GM12878 (cell line): ENCODE measurements at regions of chr10 and their contacts with region 1.

Region 1: GRCh38 chr10:96292971-96293920 is 11.0 kb upstream of the DNTT start:
- DNase-seq: no peak
- ATAC-seq: peak; percentile 79
- H3K4me3 ChIP-seq: no peak overlapping the region
- H3K27ac ChIP-seq: no peak overlapping the region
- H3K4me1 ChIP-seq: peaks cover 35% of the 10 kb centered on the region
- H3K27me3 ChIP-seq: no peaks in the 10 kb centered on the region
- CTCF ChIP-seq: peak; percentile 58 to 83 (median 76); a peak in 4 of 6 replicates
- EP300 ChIP-seq: no peak
- POLR2A ChIP-seq: no peak
- RAD21 ChIP-seq: peak; percentile 92

Region 2: DNA sequence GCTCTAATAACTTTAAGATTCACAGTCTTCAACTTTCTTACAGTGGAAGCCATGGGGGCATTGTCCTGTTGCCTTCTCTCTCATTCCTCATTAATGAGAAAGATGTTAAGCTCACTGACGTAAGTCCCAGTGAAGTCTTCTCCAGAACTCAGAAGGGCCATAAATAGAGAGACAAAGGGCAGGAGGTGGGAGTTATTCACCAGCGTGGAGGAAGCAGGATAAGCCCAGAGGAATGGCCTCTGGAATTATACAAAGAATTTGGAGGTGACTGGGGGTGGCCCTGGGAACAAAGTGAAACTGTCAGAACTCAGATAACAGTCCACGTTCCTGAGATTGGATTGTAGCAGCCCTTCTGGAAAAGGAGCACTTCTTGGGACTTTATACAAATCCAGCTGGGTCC is 784.5 kb before region 1 on chr10:
- CTCF ChIA-PET with region 1: no interaction called
- POLR2A ChIA-PET with region 1: no interaction called
- RAD21 ChIA-PET with region 1: no interaction called
- SMC1A ChIA-PET with region 1: no interaction called
- in situ Hi-C with region 1: no loop called
- intact Hi-C with region 1: no loop called
- DNase-seq: no peak
- ATAC-seq: no peak
- H3K4me3 ChIP-seq: no peak overlapping the region
- H3K27ac ChIP-seq: no peak overlapping the region
- H3K4me1 ChIP-seq: no peaks in the 10 kb centered on the region
- H3K27me3 ChIP-seq: peaks cover 0 to 3% of the 10 kb centered on the region in 2 experiments; a peak in 2 of 4 replicates
- CTCF ChIP-seq: no peak
- EP300 ChIP-seq: no peak
- POLR2A ChIP-seq: no peak
- RAD21 ChIP-seq: no peak

Region 3: DNA sequence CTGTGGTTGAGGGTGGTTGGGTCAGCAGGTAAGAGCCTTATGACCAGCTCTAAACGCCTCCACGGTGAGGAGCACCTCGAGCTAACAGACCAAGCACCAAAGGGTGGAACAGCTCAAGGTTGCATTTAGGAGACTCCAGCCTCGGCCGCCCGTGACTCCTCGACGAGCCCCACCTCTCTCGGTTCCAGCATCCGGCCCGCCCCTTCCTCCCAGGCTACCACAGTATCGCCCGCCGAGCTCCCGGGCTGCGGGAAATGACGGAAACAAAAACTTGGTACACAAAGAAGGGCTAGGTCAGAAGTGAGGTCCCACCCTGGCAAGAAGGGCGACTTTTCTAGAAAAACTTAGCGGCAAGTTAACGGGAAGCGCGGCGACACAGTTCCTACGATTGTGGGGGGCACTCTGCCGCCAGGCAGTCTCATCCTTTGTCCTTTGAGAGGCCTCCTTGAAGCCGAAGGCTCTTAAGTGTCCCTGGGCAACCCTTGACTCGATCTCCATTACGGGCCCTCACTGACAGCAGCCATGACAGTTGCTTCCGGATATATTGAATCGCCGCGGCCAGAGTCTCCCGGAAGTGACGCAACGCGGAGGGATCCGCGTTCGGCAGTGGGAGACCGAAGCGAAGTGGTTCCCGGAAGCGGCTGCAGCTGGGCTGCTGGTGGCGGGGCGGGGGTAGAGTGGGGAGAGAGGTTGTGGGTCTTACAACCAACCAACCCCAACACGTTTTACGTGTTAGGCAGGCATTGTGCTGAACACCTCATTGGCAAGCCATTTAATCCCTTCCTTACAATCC is 203.4 kb before region 1 on chr10:
- CTCF ChIA-PET with region 1: interaction called, 6 read pairs
- POLR2A ChIA-PET with region 1: interaction called, 3 read pairs
- RAD21 ChIA-PET with region 1: interaction called, 15 read pairs
- SMC1A ChIA-PET with region 1: interaction called, 6 read pairs
- in situ Hi-C with region 1: no loop called
- intact Hi-C with region 1: loop called (anchors 2 kb)
- DNase-seq: peak; percentile 84
- ATAC-seq: peak; percentile 96
- H3K4me3 ChIP-seq: peak overlapping the region; percentile 79
- H3K27ac ChIP-seq: peak overlapping the region; percentile 95
- H3K4me1 ChIP-seq: 0 out of 2 replicates have a peak, but pooled peaks cover 3% of the 10 kb centered on the region
- H3K27me3 ChIP-seq: no peaks in the 10 kb centered on the region
- CTCF ChIP-seq: no peak
- EP300 ChIP-seq: peak in 1 of 2 experiments; percentile 54; a peak in 1 of 4 replicates
- POLR2A ChIP-seq: peak; percentile 97
- RAD21 ChIP-seq: no peak

Region 4: GRCh38 chr10:96222441-96222840 is 70.8 kb before region 1 on chr10:
- CTCF ChIA-PET with region 1: interaction called, 790 read pairs
- POLR2A ChIA-PET with region 1: no interaction called
- RAD21 ChIA-PET with region 1: interaction called, 428 read pairs
- SMC1A ChIA-PET with region 1: interaction called, 424 read pairs
- in situ Hi-C with region 1: loop called (anchors 5 kb)
- intact Hi-C with region 1: no loop called
- DNase-seq: no peak
- ATAC-seq: no peak
- H3K4me3 ChIP-seq: no peak overlapping the region
- H3K27ac ChIP-seq: no peak overlapping the region
- H3K4me1 ChIP-seq: no peaks in the 10 kb centered on the region
- H3K27me3 ChIP-seq: no peaks in the 10 kb centered on the region
- CTCF ChIP-seq: no peak
- EP300 ChIP-seq: no peak
- POLR2A ChIP-seq: no peak
- RAD21 ChIP-seq: no peak

Region 5: DNA sequence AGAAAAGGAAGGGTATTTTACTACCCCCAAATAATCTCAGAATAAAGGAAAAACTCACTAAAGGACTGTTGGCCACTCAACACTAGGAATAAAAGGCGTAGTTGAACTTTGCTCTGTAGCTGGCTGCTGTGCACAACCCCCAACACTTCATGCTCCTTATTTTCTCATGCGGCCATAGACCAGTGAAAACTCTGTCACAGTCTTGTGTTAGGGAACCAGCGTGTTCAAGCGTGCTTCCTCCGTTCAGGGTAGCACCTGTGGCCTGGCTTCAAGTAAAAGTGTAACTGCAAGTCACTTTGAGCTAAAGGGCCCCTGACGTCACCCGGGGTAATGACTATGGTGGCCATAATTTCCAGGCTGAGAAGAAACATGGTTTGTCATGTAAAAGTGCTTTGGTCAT is 48.9 kb before region 1 on chr10:
- CTCF ChIA-PET with region 1: interaction called, 790 read pairs
- POLR2A ChIA-PET with region 1: interaction called, 22 read pairs
- RAD21 ChIA-PET with region 1: interaction called, 428 read pairs
- SMC1A ChIA-PET with region 1: interaction called, 60 read pairs
- in situ Hi-C with region 1: no loop called
- intact Hi-C with region 1: loop called (anchors 1 kb)
- DNase-seq: peak; percentile 89
- ATAC-seq: peak; percentile 98
- H3K4me3 ChIP-seq: 0 out of 2 replicates have a peak overlapping the region, but pooled peaks have one; percentile 18
- H3K27ac ChIP-seq: peak overlapping the region; percentile 67
- H3K4me1 ChIP-seq: peaks cover 24% of the 10 kb centered on the region
- H3K27me3 ChIP-seq: no peaks in the 10 kb centered on the region
- CTCF ChIP-seq: no peak
- EP300 ChIP-seq: peak; percentile 41 to 56; a peak in 3 of 4 replicates
- POLR2A ChIP-seq: peak; percentile 46
- RAD21 ChIP-seq: peak; percentile 3; the same call in 1 of the 2 replicates

Region 6: DNA sequence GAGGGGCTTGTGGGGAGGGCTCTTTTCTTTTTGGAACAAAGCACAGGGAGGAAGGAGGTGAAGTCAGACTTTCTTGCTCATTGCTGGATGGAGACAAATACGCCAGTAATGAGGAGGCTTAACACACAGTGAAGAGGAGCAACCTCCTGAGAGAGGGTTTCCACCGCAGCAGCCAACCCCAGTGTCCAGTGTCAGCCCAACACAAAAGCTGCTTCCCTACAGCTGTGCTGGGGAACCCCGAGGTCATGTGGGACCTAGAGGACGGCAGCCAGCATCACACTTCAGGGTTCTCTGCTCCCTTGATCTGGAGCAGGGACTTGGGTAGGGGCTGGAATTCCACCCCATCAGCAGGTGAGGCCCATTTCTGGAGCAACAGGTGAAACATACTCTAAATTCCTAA is 29.6 kb before region 1 on chr10:
- CTCF ChIA-PET with region 1: interaction called, 213 read pairs
- POLR2A ChIA-PET with region 1: interaction called, 174 read pairs
- RAD21 ChIA-PET with region 1: interaction called, 362 read pairs
- SMC1A ChIA-PET with region 1: interaction called, 305 read pairs
- in situ Hi-C with region 1: no loop called
- intact Hi-C with region 1: no loop called
- DNase-seq: no peak
- ATAC-seq: peak; percentile 68
- H3K4me3 ChIP-seq: peak overlapping the region; percentile 40
- H3K27ac ChIP-seq: peak overlapping the region; percentile 60
- H3K4me1 ChIP-seq: peaks cover 37% of the 10 kb centered on the region
- H3K27me3 ChIP-seq: no peaks in the 10 kb centered on the region
- CTCF ChIP-seq: no peak
- EP300 ChIP-seq: no peak
- POLR2A ChIP-seq: no peak; the same call in 1 of the 2 replicates
- RAD21 ChIP-seq: no peak

Region 7: DNA sequence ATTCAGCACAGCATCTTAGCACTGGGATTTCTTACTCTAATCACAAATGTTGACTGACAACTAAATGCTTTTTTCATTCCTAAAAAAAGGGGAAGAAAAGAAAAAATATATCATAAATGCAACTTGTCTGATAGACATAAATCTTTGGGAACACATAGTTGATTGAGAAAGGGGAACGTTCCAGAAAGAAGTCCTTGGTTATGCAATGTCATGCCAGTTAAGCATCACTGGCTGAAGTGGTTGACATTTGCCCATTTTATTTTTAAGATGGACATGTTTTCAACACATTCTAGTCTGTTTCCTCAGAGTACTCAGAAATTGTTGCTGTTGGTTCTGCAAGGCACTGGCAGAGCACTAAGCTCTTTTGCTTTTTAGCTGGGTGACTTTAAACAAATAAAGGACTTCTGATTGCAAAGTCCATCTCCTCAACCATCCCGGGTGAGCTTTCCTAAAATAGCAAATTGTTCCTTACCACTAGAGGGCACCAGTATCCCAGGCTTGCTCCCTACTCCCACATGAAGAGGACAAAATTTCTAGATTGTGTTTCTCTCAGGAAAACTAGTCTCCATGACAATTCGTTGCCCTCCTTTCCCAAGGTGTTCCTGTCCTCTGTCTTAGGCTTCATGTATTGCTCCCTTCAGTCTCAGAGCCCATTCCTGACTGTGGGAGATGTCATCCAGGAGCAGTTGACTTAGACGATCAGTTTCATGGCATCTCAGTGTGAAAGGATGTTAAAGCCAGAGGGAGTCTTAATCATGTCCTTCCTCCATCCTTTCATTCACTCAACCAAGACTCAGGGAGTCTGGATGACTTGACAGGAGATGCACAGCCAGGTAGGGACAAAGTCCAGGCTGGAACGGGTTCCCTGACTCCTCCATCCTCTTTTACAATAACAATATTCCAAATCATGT is 41.6 kb after region 1 on chr10:
- CTCF ChIA-PET with region 1: interaction called, 11 read pairs
- POLR2A ChIA-PET with region 1: interaction called, 9 read pairs
- RAD21 ChIA-PET with region 1: interaction called, 4 read pairs
- SMC1A ChIA-PET with region 1: interaction called, 5 read pairs
- in situ Hi-C with region 1: no loop called
- intact Hi-C with region 1: no loop called
- DNase-seq: no peak
- ATAC-seq: no peak; the same call in 2 of the 3 replicates
- H3K4me3 ChIP-seq: no peak overlapping the region
- H3K27ac ChIP-seq: no peak overlapping the region
- H3K4me1 ChIP-seq: no peaks in the 10 kb centered on the region
- H3K27me3 ChIP-seq: no peaks in the 10 kb centered on the region
- CTCF ChIP-seq: peak; percentile 62 to 77 (median 62); a peak in 5 of 6 replicates
- EP300 ChIP-seq: no peak
- POLR2A ChIP-seq: no peak
- RAD21 ChIP-seq: peak; percentile 47